ENCODE measurements at regions of chr17 and their contacts with region 1.

Region 1: DNA sequence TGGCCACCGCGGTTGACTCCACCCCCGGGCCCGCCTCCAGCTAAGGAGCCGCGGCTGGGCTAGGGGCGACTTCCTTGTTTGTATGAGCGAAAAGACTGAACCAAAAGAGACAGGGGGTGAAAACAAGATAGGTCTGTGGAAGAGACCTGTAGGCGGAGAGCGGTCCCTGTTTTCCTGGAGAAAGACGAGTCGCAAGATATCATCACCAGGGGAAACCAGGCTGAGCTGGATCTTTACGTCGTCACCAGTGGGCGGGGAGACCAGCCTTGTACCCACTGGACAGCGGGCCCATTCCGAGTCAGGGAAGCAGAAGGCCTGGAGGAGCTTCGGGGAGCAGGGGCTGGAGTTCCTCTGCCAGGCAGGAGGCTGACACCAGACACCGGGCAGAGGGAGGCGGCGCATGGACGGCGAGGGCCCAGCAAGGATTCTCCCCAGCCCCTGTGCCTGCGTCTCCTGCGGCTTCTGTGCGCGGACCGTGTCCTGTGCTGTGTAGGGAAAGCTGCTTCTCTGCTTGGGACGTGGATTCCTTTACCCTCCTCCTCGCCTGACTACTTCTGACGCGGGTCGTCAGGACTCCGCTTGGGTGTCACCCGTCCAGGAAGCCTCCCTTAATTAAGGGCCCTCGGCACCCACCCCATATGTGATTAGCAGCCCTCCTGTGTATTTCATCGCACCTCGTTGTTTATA is 10.3 kb upstream of the ARL4D start:
- DNase-seq: peak; percentile 96 to 97
- H3K4me3 ChIP-seq: peak overlapping the region; percentile 71 to 77
- H3K27ac ChIP-seq: peak overlapping the region; percentile 100
- H3K4me1 ChIP-seq: peaks cover 0 to 16% (median 10%) of the 10 kb centered on the region in 4 donors
- H3K27me3 ChIP-seq: no peaks in the 10 kb centered on the region
- CTCF ChIP-seq: peak in 1 of 2 experiments; percentile 8

Region 2: DNA sequence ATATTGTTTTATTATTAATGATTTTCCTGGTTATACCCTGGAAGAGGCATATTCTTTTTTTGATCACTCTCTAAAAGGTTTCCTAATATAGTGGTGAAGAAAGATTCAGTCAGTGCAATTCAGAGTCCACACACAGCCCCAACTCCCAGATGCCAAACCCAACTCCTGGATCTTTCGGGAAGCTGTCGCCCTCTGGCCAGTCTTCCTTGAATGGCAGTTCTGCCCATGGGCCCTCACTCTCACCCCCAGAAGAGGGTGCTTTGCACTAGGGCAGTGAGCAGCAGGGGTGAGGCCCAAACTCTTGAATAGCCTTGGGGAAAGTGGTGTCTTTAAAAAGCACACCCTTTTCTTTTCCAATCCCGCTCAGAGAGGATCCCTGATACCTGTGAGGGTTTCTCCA is 1932.3 kb before region 1 on chr17:
- intact Hi-C with region 1: no loop called
- DNase-seq: no peak
- H3K4me3 ChIP-seq: no peak overlapping the region
- H3K27ac ChIP-seq: no peak overlapping the region
- H3K4me1 ChIP-seq: no peaks in the 10 kb centered on the region
- H3K27me3 ChIP-seq: peaks cover 0 to 2% of the 10 kb centered on the region in 2 donors
- CTCF ChIP-seq: no peak

Region 3: GRCh38 chr17:42846614-42847282 is 541.8 kb before region 1 on chr17:
- intact Hi-C with region 1: no loop called
- DNase-seq: peak in 1 of 2 donors; percentile 53
- H3K4me3 ChIP-seq: no peak overlapping the region
- H3K27ac ChIP-seq: peak overlapping the region; percentile 57 to 59
- H3K4me1 ChIP-seq: peaks cover 0 to 39% (median 18%) of the 10 kb centered on the region in 4 donors
- H3K27me3 ChIP-seq: no peaks in the 10 kb centered on the region
- CTCF ChIP-seq: no peak

Region 4: DNA sequence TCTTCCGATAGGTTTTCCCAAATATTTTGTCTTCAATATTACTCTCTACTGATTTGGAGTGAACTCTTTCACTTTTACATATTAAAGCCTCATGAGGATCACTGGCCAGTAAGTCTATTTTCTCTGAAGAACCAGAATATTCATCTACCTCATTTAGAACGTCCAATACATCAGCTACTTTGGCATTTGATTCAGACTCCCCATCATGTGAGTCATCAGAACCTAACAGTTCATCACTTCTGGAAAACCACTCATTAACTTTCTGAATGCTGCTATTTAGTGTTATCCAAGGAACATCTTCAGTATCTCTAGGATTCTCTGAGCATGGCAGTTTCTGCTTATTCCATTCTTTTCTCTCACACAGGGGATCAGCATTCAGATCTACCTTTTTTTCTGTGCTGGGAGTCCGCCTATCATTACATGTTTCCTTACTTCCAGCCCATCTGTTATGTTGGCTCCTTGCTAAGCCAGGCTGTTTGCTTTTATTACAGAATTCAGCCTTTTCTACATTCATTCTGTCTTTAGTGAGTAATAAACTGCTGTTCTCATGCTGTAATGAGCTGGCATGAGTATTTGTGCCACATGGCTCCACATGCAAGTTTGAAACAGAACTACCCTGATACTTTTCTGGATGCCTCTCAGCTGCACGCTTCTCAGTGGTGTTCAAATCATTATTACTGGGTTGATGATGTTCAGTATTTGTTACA is 294.2 kb before region 1 on chr17:
- intact Hi-C with region 1: no loop called
- DNase-seq: no peak
- H3K4me3 ChIP-seq: no peak overlapping the region
- H3K27ac ChIP-seq: no peak overlapping the region
- H3K4me1 ChIP-seq: peaks cover 0 to 39% (median 17%) of the 10 kb centered on the region in 4 donors
- H3K27me3 ChIP-seq: no peaks in the 10 kb centered on the region
- CTCF ChIP-seq: no peak

Region 5: GRCh38 chr17:43367737-43368242 is 20.7 kb before region 1 on chr17:
- intact Hi-C with region 1: loop called (anchors 2 kb)
- DNase-seq: no peak
- H3K4me3 ChIP-seq: peak overlapping the region; percentile 56 to 75
- H3K27ac ChIP-seq: peak overlapping the region; percentile 99 to 100
- H3K4me1 ChIP-seq: peaks cover 0 to 21% (median 13%) of the 10 kb centered on the region in 4 donors
- H3K27me3 ChIP-seq: no peaks in the 10 kb centered on the region
- CTCF ChIP-seq: no peak

Region 6: GRCh38 chr17:43431714-43432523 is 43.4 kb after region 1 on chr17:
- intact Hi-C with region 1: no loop called
- DNase-seq: peak in 1 of 2 donors; percentile 45
- H3K4me3 ChIP-seq: no peak overlapping the region
- H3K27ac ChIP-seq: no peak overlapping the region
- H3K4me1 ChIP-seq: peaks cover 0 to 8% (median 5%) of the 10 kb centered on the region in 4 donors
- H3K27me3 ChIP-seq: no peaks in the 10 kb centered on the region
- CTCF ChIP-seq: no peak

Measured in tibial artery (tissue), 4 donors.